ENCODE measurements at regions of chr4 and their contacts with region 1.

Region 1: DNA sequence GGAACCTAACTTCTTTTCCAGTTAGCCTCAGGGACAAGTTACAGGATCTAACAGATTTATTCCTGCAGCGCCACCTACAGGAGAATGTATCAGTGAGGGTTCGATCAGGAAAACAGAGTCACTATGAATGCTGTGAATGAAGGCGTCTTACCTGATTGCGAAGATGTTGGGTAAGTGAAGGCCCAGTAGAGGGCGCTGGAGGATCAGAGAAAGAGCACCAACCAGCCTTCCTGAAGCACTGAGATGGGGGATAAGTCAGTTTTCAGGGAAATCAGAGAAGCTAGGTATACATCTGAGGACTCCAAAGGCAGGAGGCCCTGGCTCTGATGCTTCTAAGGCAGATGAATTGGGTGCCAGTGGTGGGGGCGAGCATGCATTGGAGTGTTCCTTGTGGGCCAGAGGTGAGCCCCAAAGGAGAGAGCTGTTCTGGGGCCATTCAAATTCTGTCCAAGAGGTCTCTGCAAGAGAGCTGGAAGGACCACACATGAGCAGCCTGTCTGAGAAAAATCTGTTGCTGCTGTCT is 169.9 kb upstream of the AADAT start:
- DNase-seq: peak; percentile 73
- H3K4me3 Mint-ChIP-seq: no peak overlapping the region
- H3K27ac Mint-ChIP-seq: no peak overlapping the region
- H3K4me1 Mint-ChIP-seq: no peaks in the 10 kb centered on the region
- H3K27me3 Mint-ChIP-seq: no peaks in the 10 kb centered on the region

Region 2: DNA sequence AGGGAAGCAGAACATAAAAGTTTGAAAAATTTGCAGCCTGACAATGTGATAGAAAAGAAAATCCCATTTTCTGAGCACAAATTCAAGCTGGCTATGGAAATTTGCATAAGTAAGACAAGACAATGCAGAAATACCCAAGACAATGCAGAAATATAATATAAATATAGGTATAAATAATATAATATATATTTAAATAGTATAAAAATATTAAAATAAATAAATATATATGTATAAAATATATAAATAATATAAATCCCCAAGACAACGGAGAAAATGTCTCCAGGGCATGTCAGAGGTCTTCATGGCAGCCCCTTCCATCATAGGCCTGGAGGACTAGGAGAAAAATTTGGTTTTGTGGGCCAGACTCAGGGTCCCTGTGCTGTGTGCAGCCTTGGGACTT is 45.0 kb before region 1 on chr4:
- CTCF ChIA-PET with region 1: no interaction called
- intact Hi-C with region 1: no loop called
- DNase-seq: no peak
- H3K4me3 Mint-ChIP-seq: no peak overlapping the region
- H3K27ac Mint-ChIP-seq: no peak overlapping the region
- H3K4me1 Mint-ChIP-seq: no peaks in the 10 kb centered on the region
- H3K27me3 Mint-ChIP-seq: no peaks in the 10 kb centered on the region

Region 3: GRCh38 chr4:170853422-170854021 is 593.8 kb after region 1 on chr4:
- CTCF ChIA-PET with region 1: interaction called, 3 read pairs
- intact Hi-C with region 1: loop called (anchors 2 kb)
- DNase-seq: peak; percentile 22
- H3K4me3 Mint-ChIP-seq: no peak overlapping the region
- H3K27ac Mint-ChIP-seq: no peak overlapping the region
- H3K4me1 Mint-ChIP-seq: no peaks in the 10 kb centered on the region
- H3K27me3 Mint-ChIP-seq: no peaks in the 10 kb centered on the region

Measured in activated naive CD4-positive, alpha-beta T cell treated with anti-CD3 and anti-CD28 coated beads for 36 hours (primary cell).